ENCODE measurements at regions of chr11 and their contacts with region 1.

Region 1: GRCh38 chr11:62601394-62602140 is at the start of gene MTA2:
- DNase-seq: peak; percentile 94
- ATAC-seq: peak; percentile 93
- H3K4me3 ChIP-seq: peak within 1 kb of the TSS; percentile 91 to 94 (median 94)
- H3K27ac ChIP-seq: peak within 1 kb of the TSS; percentile 88
- H3K4me1 ChIP-seq: peaks cover 43% of the 10 kb centered on the region
- H3K27me3 ChIP-seq: no peaks in the 10 kb centered on the region; a peak in 1 of 5 replicates
- CTCF ChIP-seq: 0 out of 2 replicates have a peak, but pooled peaks have one; percentile 2
- EP300 ChIP-seq: no peak
- POLR2A ChIP-seq: peak in 1 of 2 experiments; percentile 72; a peak in 2 of 4 replicates
- RAD21 ChIP-seq: no peak
- total RNA-seq, gene MTA2: 58.1 and 70.0 TPM in 2 replicates

Region 2: GRCh38 chr11:62612366-62613290 is 11.1 kb after region 1 on chr11 and contains the starts of genes EML3 and ROM1:
- CTCF ChIA-PET with region 1: no interaction called
- POLR2A ChIA-PET with region 1: interaction called, 27 read pairs
- in situ Hi-C with region 1: no loop called
- intact Hi-C with region 1: no loop called
- DNase-seq: peak; percentile 70
- ATAC-seq: peak; percentile 74
- H3K4me3 ChIP-seq: peak within 1 kb of the TSS; percentile 77 to 93 (median 77)
- H3K27ac ChIP-seq: peak within 1 kb of the TSS; percentile 64
- H3K4me1 ChIP-seq: peaks cover 50% of the 10 kb centered on the region
- H3K27me3 ChIP-seq: no peaks in the 10 kb centered on the region; a peak in 1 of 5 replicates
- CTCF ChIP-seq: peak; percentile 74
- EP300 ChIP-seq: no peak
- POLR2A ChIP-seq: peak in 1 of 2 experiments; percentile 19; a peak in 1 of 4 replicates
- RAD21 ChIP-seq: peak; percentile 73
- total RNA-seq, gene EML3: 4.6 and 10.6 TPM in 2 replicates
- total RNA-seq, gene ROM1: 1.8 and 2.4 TPM in 2 replicates

Region 3: GRCh38 chr11:62645956-62646824 is 44.6 kb after region 1 on chr11 and contains the start of gene GANAB:
- CTCF ChIA-PET with region 1: no interaction called
- POLR2A ChIA-PET with region 1: interaction called, 24 read pairs
- in situ Hi-C with region 1: no loop called
- intact Hi-C with region 1: no loop called
- DNase-seq: peak; percentile 95
- ATAC-seq: peak; percentile 94
- H3K4me3 ChIP-seq: peak within 1 kb of the TSS; percentile 86 to 96 (median 90)
- H3K27ac ChIP-seq: peak within 1 kb of the TSS; percentile 98
- H3K4me1 ChIP-seq: peaks cover 53% of the 10 kb centered on the region
- H3K27me3 ChIP-seq: no peaks in the 10 kb centered on the region
- CTCF ChIP-seq: no peak
- EP300 ChIP-seq: no peak; a peak in 1 of 4 replicates
- POLR2A ChIP-seq: peak; percentile 92 to 95
- RAD21 ChIP-seq: no peak
- total RNA-seq, gene GANAB: 50.8 and 99.5 TPM in 2 replicates

Region 4: DNA sequence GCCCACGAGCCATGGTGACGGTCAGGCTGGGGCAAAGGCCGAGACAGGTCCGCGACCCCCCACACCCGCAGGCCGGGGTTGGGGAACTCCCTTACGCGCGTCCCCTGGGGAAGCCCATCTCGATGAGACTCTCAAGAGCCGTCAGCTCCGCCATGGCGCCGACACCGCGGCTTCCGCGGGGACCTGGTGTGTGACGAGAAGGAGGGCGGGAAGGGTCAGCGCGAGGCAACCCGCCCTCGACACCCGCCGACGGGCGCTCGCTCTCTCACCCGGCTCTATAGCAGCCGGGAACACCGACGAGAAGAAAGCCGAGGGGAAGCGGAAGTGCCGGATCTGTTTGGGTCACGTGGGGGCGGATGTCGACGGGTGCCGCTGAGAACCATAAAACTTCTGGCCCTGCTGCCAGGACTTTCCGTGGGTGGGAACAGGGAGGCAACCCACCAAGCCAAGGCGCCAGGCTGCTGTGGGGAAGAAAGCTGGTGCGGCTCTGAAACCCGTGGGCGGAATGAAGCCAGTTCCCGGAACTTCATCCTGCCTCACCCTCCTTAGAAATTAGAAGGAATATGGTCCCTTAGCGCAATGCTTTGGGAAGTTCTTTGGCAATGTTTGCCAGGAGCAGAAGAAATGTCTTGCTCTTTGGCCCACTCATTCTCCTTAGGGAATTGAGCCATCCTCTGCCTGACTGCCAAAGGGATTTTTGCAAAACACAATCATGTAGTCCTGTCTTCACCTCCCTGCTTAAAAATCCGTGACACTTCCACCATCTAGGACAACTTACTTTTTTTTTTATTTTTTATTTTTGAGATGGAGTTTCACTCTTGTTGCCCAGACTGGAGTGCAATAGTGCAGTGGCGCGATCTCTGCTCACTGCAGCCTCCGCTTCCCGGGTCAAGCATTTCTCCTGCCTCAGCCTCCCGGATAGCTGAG is 77.5 kb after region 1 on chr11 and contains the start of gene UBXN1:
- CTCF ChIA-PET with region 1: no interaction called
- POLR2A ChIA-PET with region 1: interaction called, 10 read pairs
- in situ Hi-C with region 1: no loop called
- intact Hi-C with region 1: no loop called
- DNase-seq: peak; percentile 79
- ATAC-seq: peak; percentile 79
- H3K4me3 ChIP-seq: peak within 1 kb of the TSS; percentile 88 to 98 (median 94)
- H3K27ac ChIP-seq: peak within 1 kb of the TSS; percentile 86
- H3K4me1 ChIP-seq: peaks cover 37% of the 10 kb centered on the region
- H3K27me3 ChIP-seq: no peaks in the 10 kb centered on the region
- CTCF ChIP-seq: no peak
- EP300 ChIP-seq: no peak
- POLR2A ChIP-seq: peak; percentile 72 to 79
- RAD21 ChIP-seq: no peak; the same call in 1 of the 2 replicates
- total RNA-seq, gene UBXN1: 52.4 and 58.9 TPM in 2 replicates

Region 5: GRCh38 chr11:62747475-62748160 is 146.1 kb after region 1 on chr11:
- CTCF ChIA-PET with region 1: no interaction called
- POLR2A ChIA-PET with region 1: no interaction called
- in situ Hi-C with region 1: no loop called
- intact Hi-C with region 1: no loop called
- DNase-seq: no peak
- ATAC-seq: no peak
- H3K4me3 ChIP-seq: no peak overlapping the region
- H3K27ac ChIP-seq: no peak overlapping the region
- H3K4me1 ChIP-seq: no peaks in the 10 kb centered on the region
- H3K27me3 ChIP-seq: no peaks in the 10 kb centered on the region
- CTCF ChIP-seq: no peak
- EP300 ChIP-seq: no peak
- POLR2A ChIP-seq: no peak
- RAD21 ChIP-seq: no peak

Measured in HepG2 (cell line).